HCT116 (cell line): ENCODE measurements at regions of chr20 and their contacts with region 1.

Region 1: DNA sequence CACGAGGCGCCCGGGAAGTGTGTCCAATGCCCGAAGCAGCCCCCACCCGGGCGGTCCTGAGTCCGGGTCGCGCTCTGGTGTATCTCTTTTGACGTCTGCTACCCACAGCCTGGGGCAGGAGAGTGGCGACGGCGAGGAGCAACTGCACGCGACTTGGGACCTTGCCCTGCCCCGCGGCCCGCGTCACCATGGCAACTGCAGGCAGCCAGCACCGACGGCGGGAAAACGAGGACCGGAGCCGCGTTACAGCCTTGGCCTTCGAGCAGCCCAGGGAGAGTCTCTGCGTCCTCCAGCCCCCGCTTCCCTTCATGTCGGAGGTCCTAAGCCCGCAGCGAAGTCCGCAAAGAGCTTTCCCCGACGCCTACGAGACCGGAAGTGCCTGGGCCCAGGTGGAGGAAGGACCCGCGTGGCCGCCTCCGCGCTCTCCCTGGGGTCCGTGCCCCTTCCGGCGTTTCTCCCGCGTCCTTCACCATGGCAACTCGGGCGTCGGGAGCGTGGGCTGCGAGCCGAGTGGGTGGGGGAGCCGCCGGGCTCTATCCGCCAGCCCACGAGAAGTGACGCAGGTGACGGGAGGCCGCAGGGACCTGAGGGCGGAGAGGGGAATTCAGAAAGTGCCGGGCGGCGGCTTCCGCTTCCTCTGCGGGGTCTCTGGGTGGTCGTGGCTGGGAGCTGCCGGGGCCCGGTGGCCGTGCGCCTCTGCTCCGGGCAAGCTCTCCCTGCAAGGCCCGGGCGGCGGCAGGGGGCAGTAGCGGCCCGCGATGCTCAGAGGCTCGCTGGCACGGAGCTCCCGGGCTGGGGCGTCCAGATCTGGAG is 88.6 kb upstream of the TGM3 start:
- DNase-seq: peak; percentile 29
- ATAC-seq: peak; percentile 99
- H3K4me3 ChIP-seq: peak overlapping the region; percentile 40 to 56
- H3K27ac ChIP-seq: peak overlapping the region; percentile 11; the same call in 1 of the 2 replicates
- H3K4me1 ChIP-seq: peaks cover 4 to 15% of the 10 kb centered on the region in 2 experiments; a peak in 2 of 4 replicates
- H3K27me3 ChIP-seq: no peaks in the 10 kb centered on the region
- CTCF ChIP-seq: peak; percentile 68 to 84 (median 77)
- POLR2A ChIP-seq: no peak
- RAD21 ChIP-seq: peak; percentile 87

Region 2: DNA sequence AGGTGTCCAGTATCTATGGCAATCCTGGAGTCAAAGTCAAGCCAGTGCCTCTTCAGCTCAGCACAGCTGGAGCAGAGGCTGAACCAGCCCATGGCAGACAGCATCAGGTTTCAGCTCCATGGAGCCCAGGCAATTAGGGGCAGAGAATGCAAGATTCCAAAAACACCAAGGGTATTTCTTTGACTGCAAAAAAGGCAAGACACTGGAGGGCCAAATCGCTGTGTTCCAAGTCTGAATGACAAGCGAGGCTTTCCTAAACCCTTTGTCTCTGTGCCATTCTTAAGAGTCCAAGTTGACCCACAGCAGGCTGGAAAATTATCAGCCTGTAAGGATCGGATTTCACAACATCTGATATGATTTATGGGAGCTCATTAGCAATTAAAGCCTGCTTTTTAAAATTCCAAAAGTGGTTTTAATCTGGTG is 38.9 kb after region 1 on chr20:
- CTCF ChIA-PET with region 1: no interaction called
- POLR2A ChIA-PET with region 1: no interaction called
- RAD21 ChIA-PET with region 1: no interaction called
- intact Hi-C with region 1: no loop called
- DNase-seq: no peak
- ATAC-seq: no peak
- H3K4me3 ChIP-seq: no peak overlapping the region
- H3K27ac ChIP-seq: no peak overlapping the region
- H3K4me1 ChIP-seq: peaks cover 4 to 5% of the 10 kb centered on the region in 2 experiments; a peak in 1 of 4 replicates
- H3K27me3 ChIP-seq: peaks cover 6% of the 10 kb centered on the region; the same call in 1 of the 2 replicates
- CTCF ChIP-seq: no peak
- POLR2A ChIP-seq: no peak
- RAD21 ChIP-seq: no peak

Region 3: GRCh38 chr20:2387180-2387577 is 180.0 kb after region 1 on chr20:
- CTCF ChIA-PET with region 1: interaction called, 20 read pairs
- POLR2A ChIA-PET with region 1: interaction called, 4 read pairs
- RAD21 ChIA-PET with region 1: no interaction called
- intact Hi-C with region 1: no loop called
- DNase-seq: peak; percentile 39
- ATAC-seq: peak; percentile 93
- H3K4me3 ChIP-seq: no peak overlapping the region
- H3K27ac ChIP-seq: no peak overlapping the region
- H3K4me1 ChIP-seq: peaks cover 0 to 8% of the 10 kb centered on the region in 2 experiments; a peak in 2 of 4 replicates
- H3K27me3 ChIP-seq: no peaks in the 10 kb centered on the region
- CTCF ChIP-seq: peak; percentile 52 to 81 (median 80); a peak in 5 of 6 replicates
- POLR2A ChIP-seq: no peak
- RAD21 ChIP-seq: peak; percentile 49

Region 4: DNA sequence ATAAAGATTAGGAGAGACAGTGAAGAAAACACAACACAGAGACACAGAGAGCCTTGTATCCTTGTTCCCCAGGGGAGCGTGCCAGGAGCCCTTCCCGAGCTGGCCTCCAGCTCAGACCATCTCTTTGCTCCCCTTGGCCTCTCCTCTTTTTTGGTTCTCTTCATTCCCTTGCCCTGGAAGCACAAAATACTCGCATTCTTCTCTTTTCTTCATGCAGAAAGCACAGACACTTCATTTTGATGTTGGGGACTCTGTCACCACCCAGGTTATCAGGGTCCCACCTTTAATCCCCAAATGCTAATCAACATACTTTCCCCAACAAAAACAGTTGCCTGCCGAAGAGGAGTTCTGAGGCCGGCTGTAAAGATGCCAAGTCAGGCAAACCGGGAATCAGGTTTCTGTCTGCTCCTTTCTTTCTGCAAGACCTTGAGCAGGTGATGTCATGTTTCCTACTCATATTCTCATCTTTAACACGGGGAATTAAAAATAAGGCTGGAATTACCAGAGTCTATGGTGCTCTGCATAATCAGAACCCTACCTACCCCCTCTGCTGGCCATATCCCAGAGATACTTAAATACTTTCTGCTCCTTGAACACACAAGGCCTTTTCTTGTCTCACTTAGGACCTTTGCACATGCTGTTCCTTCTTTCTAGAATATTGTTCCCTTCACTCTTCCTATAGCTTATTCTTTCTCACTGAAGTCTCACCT is 195.3 kb after region 1 on chr20:
- CTCF ChIA-PET with region 1: interaction called, 14 read pairs
- POLR2A ChIA-PET with region 1: no interaction called
- RAD21 ChIA-PET with region 1: no interaction called
- intact Hi-C with region 1: loop called (anchors 2 kb)
- DNase-seq: peak; percentile 34
- ATAC-seq: peak; percentile 81
- H3K4me3 ChIP-seq: no peak overlapping the region
- H3K27ac ChIP-seq: no peak overlapping the region
- H3K4me1 ChIP-seq: no peaks in the 10 kb centered on the region
- H3K27me3 ChIP-seq: no peaks in the 10 kb centered on the region
- CTCF ChIP-seq: peak; percentile 59 to 60 (median 60); a peak in 5 of 6 replicates
- POLR2A ChIP-seq: no peak
- RAD21 ChIP-seq: peak; percentile 54

Region 5: GRCh38 chr20:2451939-2452732 is 245.0 kb after region 1 on chr20:
- CTCF ChIA-PET with region 1: interaction called, 53 read pairs
- POLR2A ChIA-PET with region 1: no interaction called
- RAD21 ChIA-PET with region 1: interaction called, 3 to 5 read pairs
- intact Hi-C with region 1: loop called (anchors 1 kb)
- DNase-seq: peak; percentile 48
- ATAC-seq: peak; percentile 86
- H3K4me3 ChIP-seq: no peak overlapping the region
- H3K27ac ChIP-seq: no peak overlapping the region
- H3K4me1 ChIP-seq: no peaks in the 10 kb centered on the region
- H3K27me3 ChIP-seq: no peaks in the 10 kb centered on the region
- CTCF ChIP-seq: peak; percentile 64 to 87 (median 84); a peak in 5 of 6 replicates
- POLR2A ChIP-seq: no peak
- RAD21 ChIP-seq: peak; percentile 71

Region 6: DNA sequence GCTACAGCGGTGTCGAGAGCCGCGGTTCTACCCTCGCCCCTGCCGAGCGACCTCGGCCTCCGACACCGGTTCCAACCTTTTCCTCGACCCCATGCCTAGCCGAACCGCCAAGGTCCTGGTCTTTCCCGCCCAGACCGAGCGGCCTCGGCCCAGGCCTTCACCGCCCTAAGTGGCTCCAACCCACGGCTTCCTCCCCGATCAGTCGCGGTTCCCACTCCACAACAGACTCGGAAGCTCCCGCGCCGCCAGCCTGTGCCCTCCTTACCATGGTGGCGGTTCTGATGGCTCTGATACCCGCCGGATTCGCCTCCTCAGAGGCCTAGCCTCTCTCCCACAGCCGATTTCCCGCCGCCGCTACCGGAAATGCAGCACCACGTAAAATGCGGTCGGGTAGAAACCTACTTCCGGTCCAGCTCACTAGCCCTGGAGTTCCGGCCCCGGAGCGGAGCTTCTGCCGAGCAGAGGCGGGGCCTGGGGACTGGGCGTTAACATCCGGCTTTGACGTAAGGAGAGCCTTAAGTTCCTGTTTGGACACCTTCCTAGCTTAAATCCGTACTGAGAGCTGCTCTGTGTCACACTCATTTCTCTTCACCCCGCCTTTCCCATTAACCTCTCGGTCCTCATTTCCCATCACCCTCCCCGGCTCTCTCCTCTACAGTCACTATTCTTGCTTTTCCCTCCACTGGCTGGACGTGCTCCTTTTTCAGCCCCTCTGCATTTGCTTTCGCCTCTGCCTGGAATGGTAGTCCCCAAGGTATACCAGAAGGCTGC is 263.4 kb after region 1 on chr20 and contains the start of gene SNRPB:
- CTCF ChIA-PET with region 1: no interaction called
- POLR2A ChIA-PET with region 1: no interaction called
- RAD21 ChIA-PET with region 1: no interaction called
- intact Hi-C with region 1: no loop called
- DNase-seq: peak; percentile 99
- ATAC-seq: peak; percentile 99
- H3K4me3 ChIP-seq: peak within 1 kb of the TSS; percentile 64 to 98
- H3K27ac ChIP-seq: peak within 1 kb of the TSS; percentile 94
- H3K4me1 ChIP-seq: peaks cover 7 to 19% of the 10 kb centered on the region in 2 experiments; a peak in 3 of 4 replicates
- H3K27me3 ChIP-seq: no peaks in the 10 kb centered on the region
- CTCF ChIP-seq: no peak
- POLR2A ChIP-seq: peak; percentile 98
- RAD21 ChIP-seq: no peak
- total RNA-seq, gene SNRPB: 469 TPM

Region 7: GRCh38 chr20:2523919-2524708 is 317.0 kb after region 1 on chr20:
- CTCF ChIA-PET with region 1: interaction called, 12 read pairs
- POLR2A ChIA-PET with region 1: no interaction called
- RAD21 ChIA-PET with region 1: no interaction called
- intact Hi-C with region 1: no loop called
- DNase-seq: peak; percentile 52
- ATAC-seq: peak; percentile 77
- H3K4me3 ChIP-seq: peak overlapping the region; percentile 60 to 70
- H3K27ac ChIP-seq: peak overlapping the region; percentile 52
- H3K4me1 ChIP-seq: peaks cover 3 to 23% of the 10 kb centered on the region in 2 experiments
- H3K27me3 ChIP-seq: no peaks in the 10 kb centered on the region
- CTCF ChIP-seq: peak; percentile 60 to 98 (median 93)
- POLR2A ChIP-seq: peak; percentile 57
- RAD21 ChIP-seq: peak; percentile 47; the same call in 1 of the 2 replicates

Region 8: GRCh38 chr20:2671977-2672376 is 464.8 kb after region 1 on chr20:
- CTCF ChIA-PET with region 1: interaction called, 3 read pairs
- POLR2A ChIA-PET with region 1: no interaction called
- RAD21 ChIA-PET with region 1: no interaction called
- intact Hi-C with region 1: loop called (anchors 10 kb)
- DNase-seq: no peak
- ATAC-seq: peak; percentile 73
- H3K4me3 ChIP-seq: no peak overlapping the region
- H3K27ac ChIP-seq: no peak overlapping the region
- H3K4me1 ChIP-seq: no peaks in the 10 kb centered on the region
- H3K27me3 ChIP-seq: no peaks in the 10 kb centered on the region
- CTCF ChIP-seq: peak; percentile 5 to 61 (median 60); a peak in 4 of 6 replicates
- POLR2A ChIP-seq: no peak
- RAD21 ChIP-seq: no peak